ENCODE measurements at regions of chr14 and their contacts with region 1.

Region 1: GRCh38 chr14:101707068-101707842 is 54.3 kb upstream of the PPP2R5C start:
- DNase-seq: peak; percentile 53
- ATAC-seq: peak; percentile 70
- H3K4me3 Mint-ChIP-seq: peak overlapping the region; percentile 63
- H3K27ac Mint-ChIP-seq: peak overlapping the region; percentile 81
- H3K4me1 Mint-ChIP-seq: peaks cover 18% of the 10 kb centered on the region
- H3K27me3 Mint-ChIP-seq: peaks cover 14% of the 10 kb centered on the region

Region 2: GRCh38 chr14:101721951-101722661 is 14.9 kb after region 1 on chr14:
- POLR2A ChIA-PET with region 1: interaction called, 16 read pairs
- DNase-seq: peak; percentile 59
- ATAC-seq: peak; percentile 85
- H3K4me3 Mint-ChIP-seq: peak overlapping the region; percentile 85
- H3K27ac Mint-ChIP-seq: peak overlapping the region; percentile 98
- H3K4me1 Mint-ChIP-seq: peaks cover 21% of the 10 kb centered on the region
- H3K27me3 Mint-ChIP-seq: no peaks in the 10 kb centered on the region

Region 3: DNA sequence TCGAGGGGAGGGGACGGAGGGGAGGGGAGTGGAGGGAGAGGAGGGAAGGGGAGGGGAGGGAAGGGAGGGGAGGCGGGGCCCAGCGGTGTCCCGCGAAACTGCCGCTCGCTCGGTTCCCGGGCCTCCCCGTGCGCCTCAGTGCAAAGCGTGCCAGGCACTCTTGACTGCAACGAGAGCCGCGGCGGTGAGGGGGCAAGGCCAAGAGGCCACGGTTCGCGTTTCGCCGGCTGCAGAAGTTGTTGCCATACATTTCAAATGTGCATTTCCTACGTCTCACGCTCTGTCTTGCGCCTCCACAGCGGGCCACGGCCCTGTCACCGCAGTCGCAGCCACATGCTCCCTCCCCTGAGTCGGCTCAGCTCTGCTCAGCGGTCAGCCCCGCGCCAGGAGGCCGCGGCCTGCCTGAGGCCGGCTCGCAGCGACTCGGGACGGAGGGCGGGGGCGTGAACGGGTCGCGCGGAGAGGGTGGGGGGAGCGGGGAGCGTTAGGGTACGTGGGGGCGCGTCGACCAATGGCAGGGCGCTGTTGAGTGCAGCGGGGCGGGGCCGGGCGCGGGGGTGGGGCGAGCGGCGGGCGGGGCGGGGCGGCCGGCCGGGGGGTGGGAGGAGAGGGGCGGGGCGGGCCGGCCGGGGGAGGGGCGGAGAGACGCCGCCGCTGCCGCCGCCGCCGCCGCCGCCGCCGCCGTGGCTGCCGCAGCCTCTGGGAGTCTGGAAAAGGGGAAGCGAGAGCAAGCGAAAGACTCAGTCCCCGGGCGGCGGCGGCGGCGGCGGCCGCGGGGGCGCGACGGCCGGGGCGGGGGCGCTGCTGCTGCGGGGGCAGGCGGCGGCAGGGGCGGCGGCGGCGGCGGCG is 54.0 kb after region 1 on chr14 and contains the start of gene PPP2R5C:
- POLR2A ChIA-PET with region 1: interaction called, 11 read pairs
- DNase-seq: peak; percentile 88
- ATAC-seq: peak; percentile 81
- H3K4me3 Mint-ChIP-seq: peak within 1 kb of the TSS; percentile 89
- H3K27ac Mint-ChIP-seq: peak within 1 kb of the TSS; percentile 80
- H3K4me1 Mint-ChIP-seq: peaks cover 14% of the 10 kb centered on the region
- H3K27me3 Mint-ChIP-seq: peaks cover 7% of the 10 kb centered on the region
- total RNA-seq, gene PPP2R5C: 369 to 382 TPM

Region 4: GRCh38 chr14:101947906-101948665 is 240.8 kb after region 1 on chr14:
- POLR2A ChIA-PET with region 1: interaction called, 13 read pairs
- DNase-seq: peak; percentile 100
- ATAC-seq: peak; percentile 98
- H3K4me3 Mint-ChIP-seq: peak overlapping the region; percentile 90
- H3K27ac Mint-ChIP-seq: peak overlapping the region; percentile 95
- H3K4me1 Mint-ChIP-seq: peaks cover 12% of the 10 kb centered on the region
- H3K27me3 Mint-ChIP-seq: peaks cover 32% of the 10 kb centered on the region